K562 (cell line): ENCODE measurements at regions of chr18 and their contacts with region 1.

Region 1: GRCh38 chr18:50819728-50820378 is at the start of gene MRO:
- DNase-seq: peak; percentile 66 to 82 (median 72)
- ATAC-seq: peak; percentile 98
- H3K4me3 ChIP-seq: 0 out of 2 replicates have a peak within 1 kb of the TSS, but pooled peaks have one; percentile 16
- H3K27ac ChIP-seq: no peak within 1 kb of the TSS; the same call in 2 of the 3 replicates
- H3K4me1 ChIP-seq: peaks cover 5 to 9% of the 10 kb centered on the region in 2 experiments; a peak in 3 of 5 replicates
- H3K27me3 ChIP-seq: peaks cover 0 to 8% of the 10 kb centered on the region in 2 experiments; a peak in 3 of 5 replicates
- CTCF ChIP-seq: peak; percentile 86 to 89 (median 88)
- EP300 ChIP-seq: no peak
- POLR2A ChIP-seq: no peak
- RAD21 ChIP-seq: peak; percentile 89 to 96
- polyA plus RNA-seq, gene MRO: 0.06 TPM in 1 of 2 experiments, not detected in the other

Region 2: DNA sequence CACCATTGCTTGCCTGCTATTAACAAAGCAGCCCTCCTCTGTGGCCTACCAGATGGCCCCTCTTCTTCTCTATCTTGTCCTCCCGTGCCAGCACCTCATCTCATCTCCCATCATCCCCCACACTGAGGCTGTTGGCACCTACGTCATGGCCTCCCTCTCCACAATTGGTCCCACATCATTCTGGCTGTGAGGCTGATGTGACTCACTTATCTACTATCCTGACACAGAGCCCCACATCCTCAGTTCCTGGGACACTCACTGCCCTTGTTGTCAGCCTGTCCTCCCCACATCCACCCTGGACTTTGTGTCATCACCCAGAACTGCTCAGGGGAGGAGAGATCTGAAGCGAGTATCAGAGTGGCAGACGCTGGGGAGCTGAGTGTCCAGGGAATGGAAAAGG is 103.0 kb before region 1 on chr18:
- CTCF ChIA-PET with region 1: no interaction called
- POLR2A ChIA-PET with region 1: no interaction called
- in situ Hi-C with region 1: no loop called
- intact Hi-C with region 1: no loop called
- DNase-seq: no peak
- ATAC-seq: no peak
- H3K4me3 ChIP-seq: no peak overlapping the region
- H3K27ac ChIP-seq: no peak overlapping the region
- H3K4me1 ChIP-seq: no peaks in the 10 kb centered on the region
- H3K27me3 ChIP-seq: 0 out of 5 replicates have a peak, but pooled peaks cover 0 to 4% of the 10 kb centered on the region in 2 experiments
- CTCF ChIP-seq: no peak
- EP300 ChIP-seq: no peak
- POLR2A ChIP-seq: no peak
- RAD21 ChIP-seq: no peak

Region 3: DNA sequence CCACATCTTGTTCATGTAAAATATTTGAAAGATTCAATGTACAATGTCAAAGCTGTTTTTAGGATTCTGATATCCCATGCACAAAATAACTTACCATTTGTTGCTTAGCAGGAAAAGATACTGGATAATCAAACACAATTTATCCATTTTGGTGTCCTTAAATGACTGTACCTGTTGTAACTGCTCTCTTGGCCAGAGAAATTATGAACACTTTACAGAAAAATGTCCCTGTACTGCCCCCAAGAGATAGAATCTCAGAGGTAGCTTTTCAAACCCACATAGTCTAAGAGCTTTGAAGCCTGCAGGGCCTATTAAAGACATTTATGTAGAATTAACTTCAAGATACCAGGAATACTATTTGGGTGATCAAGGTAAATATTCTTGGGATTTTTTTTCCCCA is 46.9 kb after region 1 on chr18:
- CTCF ChIA-PET with region 1: interaction called, 10 read pairs
- POLR2A ChIA-PET with region 1: no interaction called
- in situ Hi-C with region 1: no loop called
- intact Hi-C with region 1: loop called (anchors 1 kb)
- DNase-seq: no peak
- ATAC-seq: peak; percentile 79
- H3K4me3 ChIP-seq: no peak overlapping the region
- H3K27ac ChIP-seq: no peak overlapping the region
- H3K4me1 ChIP-seq: peaks cover 0 to 4% of the 10 kb centered on the region in 2 experiments; a peak in 1 of 5 replicates
- H3K27me3 ChIP-seq: no peaks in the 10 kb centered on the region; a peak in 1 of 5 replicates
- CTCF ChIP-seq: peak in 2 of 3 experiments; percentile 6 to 38; a peak in 3 of 6 replicates
- EP300 ChIP-seq: no peak
- POLR2A ChIP-seq: no peak
- RAD21 ChIP-seq: peak; percentile 37 to 65; a peak in 3 of 4 replicates

Region 4: DNA sequence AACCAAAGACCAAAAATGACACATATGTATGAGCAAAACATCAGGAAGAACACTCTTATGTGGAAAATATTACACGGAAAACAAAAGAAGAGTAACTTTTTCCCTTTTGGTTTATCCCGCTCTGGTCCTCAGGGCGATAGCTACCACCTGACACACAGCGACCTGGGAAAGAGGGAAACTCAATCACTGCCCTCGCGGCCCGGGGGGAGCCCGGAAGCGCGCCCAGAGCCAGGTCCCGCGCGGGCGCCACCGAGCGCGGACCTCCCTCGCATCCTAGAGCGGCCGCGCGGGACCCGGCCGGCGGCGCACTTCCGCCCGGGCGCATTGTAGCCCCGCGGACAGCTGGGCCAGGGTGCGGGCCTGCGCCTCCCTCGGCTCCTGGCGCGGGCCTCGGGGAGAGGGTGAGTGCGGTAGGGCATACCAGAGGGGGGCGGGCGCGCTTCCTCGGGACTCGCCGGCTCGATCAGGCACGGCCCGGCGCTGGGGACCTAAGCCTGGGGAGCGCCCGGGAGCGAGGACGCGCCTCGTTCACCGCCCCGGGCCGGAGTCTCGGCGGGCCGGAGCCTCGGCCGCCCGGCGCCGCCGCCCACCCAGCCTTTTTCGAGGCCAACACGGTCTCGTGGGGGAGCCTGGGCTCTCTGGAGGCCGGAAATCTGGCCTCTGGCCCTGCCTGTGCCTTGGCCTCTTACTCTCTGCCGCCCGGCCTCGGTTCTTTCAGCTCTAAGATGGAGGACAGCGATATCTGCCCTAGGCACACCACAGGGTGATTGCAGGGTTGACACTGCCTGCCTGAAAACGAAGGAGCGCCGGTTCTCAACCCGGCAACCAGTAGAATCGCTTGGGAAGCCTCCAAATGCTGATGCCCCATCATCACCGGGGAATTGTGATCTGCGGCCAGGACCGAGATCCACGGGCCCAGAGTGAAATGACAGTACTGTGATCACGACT is 148.1 kb after region 1 on chr18 and contains the start of gene ELAC1:
- CTCF ChIA-PET with region 1: no interaction called
- POLR2A ChIA-PET with region 1: no interaction called
- in situ Hi-C with region 1: no loop called
- intact Hi-C with region 1: loop called (anchors 5 kb)
- DNase-seq: peak; percentile 82 to 85 (median 82)
- ATAC-seq: peak; percentile 96
- H3K4me3 ChIP-seq: peak within 1 kb of the TSS; percentile 76
- H3K27ac ChIP-seq: peak within 1 kb of the TSS; percentile 83
- H3K4me1 ChIP-seq: peaks cover 9 to 12% of the 10 kb centered on the region in 2 experiments; a peak in 4 of 5 replicates
- H3K27me3 ChIP-seq: no peaks in the 10 kb centered on the region
- CTCF ChIP-seq: no peak
- EP300 ChIP-seq: 0 out of 2 replicates have a peak, but pooled peaks have one; percentile 9
- POLR2A ChIP-seq: peak; percentile 79
- RAD21 ChIP-seq: no peak; a peak in 1 of 4 replicates
- polyA plus RNA-seq, gene ELAC1: 3.7 to 4.6 TPM

Region 5: GRCh38 chr18:51009072-51009471 is 189.2 kb after region 1 on chr18:
- CTCF ChIA-PET with region 1: no interaction called
- POLR2A ChIA-PET with region 1: no interaction called
- in situ Hi-C with region 1: no loop called
- intact Hi-C with region 1: loop called (anchors 1 kb)
- DNase-seq: no peak
- ATAC-seq: no peak
- H3K4me3 ChIP-seq: no peak overlapping the region
- H3K27ac ChIP-seq: no peak overlapping the region
- H3K4me1 ChIP-seq: peaks cover 5 to 20% of the 10 kb centered on the region in 2 experiments; a peak in 3 of 5 replicates
- H3K27me3 ChIP-seq: no peaks in the 10 kb centered on the region
- CTCF ChIP-seq: no peak
- EP300 ChIP-seq: no peak
- POLR2A ChIP-seq: no peak
- RAD21 ChIP-seq: no peak

Region 6: GRCh38 chr18:51051105-51051712 is 231.4 kb after region 1 on chr18:
- CTCF ChIA-PET with region 1: interaction called, 7 read pairs
- POLR2A ChIA-PET with region 1: no interaction called
- in situ Hi-C with region 1: no loop called
- intact Hi-C with region 1: loop called (anchors 1 kb)
- DNase-seq: peak in 3 of 4 experiments; percentile 12 to 56 (median 20)
- ATAC-seq: peak; percentile 96
- H3K4me3 ChIP-seq: no peak overlapping the region
- H3K27ac ChIP-seq: no peak overlapping the region
- H3K4me1 ChIP-seq: no peaks in the 10 kb centered on the region
- H3K27me3 ChIP-seq: no peaks in the 10 kb centered on the region
- CTCF ChIP-seq: peak; percentile 36 to 71 (median 66); a peak in 5 of 6 replicates
- EP300 ChIP-seq: no peak
- POLR2A ChIP-seq: no peak
- RAD21 ChIP-seq: peak; percentile 41 to 72; a peak in 3 of 4 replicates

Region 7: GRCh38 chr18:51100385-51101000 is 280.6 kb after region 1 on chr18:
- CTCF ChIA-PET with region 1: no interaction called
- POLR2A ChIA-PET with region 1: no interaction called
- in situ Hi-C with region 1: no loop called
- intact Hi-C with region 1: loop called (anchors 5 kb)
- DNase-seq: peak in 1 of 4 experiments; percentile 29
- ATAC-seq: peak; percentile 78
- H3K4me3 ChIP-seq: no peak overlapping the region
- H3K27ac ChIP-seq: no peak overlapping the region
- H3K4me1 ChIP-seq: no peaks in the 10 kb centered on the region; a peak in 1 of 5 replicates
- H3K27me3 ChIP-seq: no peaks in the 10 kb centered on the region; a peak in 1 of 5 replicates
- CTCF ChIP-seq: peak in 2 of 3 experiments; percentile 31 to 36; a peak in 1 of 6 replicates
- EP300 ChIP-seq: no peak
- POLR2A ChIP-seq: no peak
- RAD21 ChIP-seq: no peak